Activated T-helper 2 cell treated with anti-CD3 and anti-CD28 coated beads, Interferon-gamma antibody, Interleukin-2, Interleukin-4, amounts not matched to agents 10 μg/mL and 5 μg/mL and 100 μg/mL, durations not matched to agents 14 hours and 24 hours and 36 hours (primary cell): ENCODE measurements at regions of chr6 and their contacts with region 1.

Region 1: GRCh38 chr6:127971945-127972391 is 71.1 kb upstream of the THEMIS start:
- DNase-seq: peak; percentile 69
- H3K4me3 Mint-ChIP-seq: peak overlapping the region; percentile 76
- H3K27ac Mint-ChIP-seq: peak overlapping the region; percentile 96
- H3K4me1 Mint-ChIP-seq: peaks cover 52% of the 10 kb centered on the region
- H3K27me3 Mint-ChIP-seq: no peaks in the 10 kb centered on the region

Region 2: DNA sequence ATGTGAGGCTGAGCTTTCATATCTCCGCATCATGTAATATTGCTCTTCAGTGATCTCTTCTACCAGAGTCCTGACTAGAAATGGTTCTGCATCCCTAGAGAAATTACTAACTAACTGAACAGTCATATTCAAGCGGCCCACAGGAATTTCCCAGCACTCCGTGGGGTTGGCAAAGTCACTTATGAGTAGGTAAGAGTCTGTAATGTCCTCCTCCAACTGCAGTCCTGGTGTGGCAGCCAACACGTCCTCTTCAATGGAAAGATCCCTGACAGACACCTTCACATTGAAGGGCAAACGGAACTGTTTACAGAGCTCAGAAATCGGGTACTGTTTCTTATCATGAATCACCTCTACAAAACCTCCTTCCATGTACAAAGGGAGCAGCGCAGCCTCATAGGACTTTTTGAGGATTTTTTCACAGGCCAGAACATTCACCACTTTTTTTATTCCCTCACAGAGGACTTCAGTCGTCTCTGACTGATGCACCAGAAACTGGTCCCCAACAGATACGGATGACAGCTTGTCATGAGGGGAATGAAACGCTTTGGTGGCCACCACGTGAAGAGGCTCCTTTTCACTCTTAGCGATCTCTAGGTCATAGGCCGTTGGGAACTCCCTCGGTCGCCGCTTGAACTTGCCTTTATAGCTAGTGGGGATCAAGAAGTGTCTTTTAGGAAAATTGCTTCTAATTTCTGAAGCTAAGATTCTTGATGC is 158.8 kb before region 1 on chr6:
- intact Hi-C with region 1: loop called (anchors 1 kb)
- DNase-seq: no peak
- H3K4me3 Mint-ChIP-seq: no peak overlapping the region
- H3K27ac Mint-ChIP-seq: peak overlapping the region; percentile 67
- H3K4me1 Mint-ChIP-seq: peaks cover 35% of the 10 kb centered on the region
- H3K27me3 Mint-ChIP-seq: no peaks in the 10 kb centered on the region

Region 3: DNA sequence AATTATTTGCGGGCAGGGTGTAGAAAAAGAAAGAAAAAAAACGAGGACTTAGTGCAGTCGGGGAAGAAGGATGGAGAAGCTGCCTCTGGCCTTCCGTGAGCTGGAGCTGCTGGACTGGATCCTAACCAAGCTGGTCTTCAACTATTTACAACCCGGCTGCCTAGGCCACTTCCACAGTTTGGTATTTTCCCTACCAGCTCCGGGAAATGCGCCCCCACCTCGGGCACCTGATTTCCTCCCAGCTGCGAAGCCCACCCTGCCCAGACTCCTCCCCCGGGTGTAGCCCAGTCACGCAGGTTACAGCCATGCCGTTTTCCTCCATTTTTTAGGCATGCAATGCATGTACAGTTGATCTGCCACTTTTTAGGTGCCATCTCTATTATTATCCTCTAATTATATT is 92.3 kb before region 1 on chr6:
- intact Hi-C with region 1: loop called (anchors 1 kb)
- DNase-seq: no peak
- H3K4me3 Mint-ChIP-seq: peak overlapping the region; percentile 58
- H3K27ac Mint-ChIP-seq: peak overlapping the region; percentile 72
- H3K4me1 Mint-ChIP-seq: peaks cover 52% of the 10 kb centered on the region
- H3K27me3 Mint-ChIP-seq: no peaks in the 10 kb centered on the region

Region 4: GRCh38 chr6:127907960-127908640 is 63.9 kb before region 1 on chr6:
- intact Hi-C with region 1: loop called (anchors 1 kb)
- DNase-seq: no peak
- H3K4me3 Mint-ChIP-seq: peak overlapping the region; percentile 62
- H3K27ac Mint-ChIP-seq: peak overlapping the region; percentile 80
- H3K4me1 Mint-ChIP-seq: peaks cover 32% of the 10 kb centered on the region
- H3K27me3 Mint-ChIP-seq: no peaks in the 10 kb centered on the region

Region 5: DNA sequence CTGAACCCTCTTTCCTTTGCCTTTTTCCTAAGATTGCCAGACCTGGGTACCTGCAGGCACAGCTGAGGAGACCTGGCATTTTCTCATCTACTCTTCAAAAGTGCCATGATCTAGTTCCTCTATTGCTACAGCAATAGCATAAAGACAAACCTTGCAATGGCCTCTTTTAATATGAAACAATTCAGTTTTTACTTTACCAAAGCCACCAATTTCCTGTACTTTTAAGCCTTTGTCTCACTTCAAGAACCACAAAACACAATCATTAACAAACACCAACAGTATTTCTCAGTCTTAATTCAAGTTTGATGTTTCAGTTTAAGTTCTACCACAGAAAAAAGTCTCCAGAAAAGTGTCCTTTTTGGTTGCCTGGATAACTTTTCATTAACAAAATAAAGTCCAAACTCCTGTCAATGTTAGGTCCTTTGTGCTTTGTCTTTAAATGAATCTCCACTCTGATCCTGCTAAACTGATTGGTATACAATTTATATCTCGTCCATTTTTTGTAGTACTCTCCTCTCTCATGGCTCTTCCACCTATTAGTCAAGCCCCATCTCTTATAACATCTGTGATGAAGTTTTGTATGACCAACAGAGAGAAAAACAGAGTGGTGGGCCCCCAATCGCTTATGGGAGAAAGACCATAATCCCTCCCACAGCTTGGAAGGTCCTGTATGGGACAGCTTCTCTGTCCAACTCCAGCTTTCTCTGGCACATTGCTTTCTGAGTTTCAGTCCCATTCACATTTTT is 20.6 kb before region 1 on chr6:
- intact Hi-C with region 1: loop called (anchors 1 kb)
- DNase-seq: no peak
- H3K4me3 Mint-ChIP-seq: peak overlapping the region; percentile 56
- H3K27ac Mint-ChIP-seq: peak overlapping the region; percentile 96
- H3K4me1 Mint-ChIP-seq: peaks cover 50% of the 10 kb centered on the region
- H3K27me3 Mint-ChIP-seq: no peaks in the 10 kb centered on the region

Region 6: GRCh38 chr6:128275030-128275429 is 303.1 kb after region 1 on chr6:
- intact Hi-C with region 1: loop called (anchors 1 kb)
- DNase-seq: no peak
- H3K4me3 Mint-ChIP-seq: no peak overlapping the region
- H3K27ac Mint-ChIP-seq: no peak overlapping the region
- H3K4me1 Mint-ChIP-seq: peaks cover 7% of the 10 kb centered on the region
- H3K27me3 Mint-ChIP-seq: peaks cover 5% of the 10 kb centered on the region

Region 7: GRCh38 chr6:128520436-128521281 is 548.7 kb after region 1 on chr6 and contains the start of gene PTPRK:
- intact Hi-C with region 1: loop called (anchors 5 kb)
- DNase-seq: peak; percentile 80
- H3K4me3 Mint-ChIP-seq: peak within 1 kb of the TSS; percentile 90
- H3K27ac Mint-ChIP-seq: peak within 1 kb of the TSS; percentile 74
- H3K4me1 Mint-ChIP-seq: peaks cover 11% of the 10 kb centered on the region
- H3K27me3 Mint-ChIP-seq: peaks cover 74% of the 10 kb centered on the region
- total RNA-seq, gene PTPRK: 4.2 and 6.1 TPM in 2 replicates